CD4-positive, alpha-beta T cell (primary cell): ENCODE measurements at regions of chr1 and their contacts with region 1.

Region 1: DNA sequence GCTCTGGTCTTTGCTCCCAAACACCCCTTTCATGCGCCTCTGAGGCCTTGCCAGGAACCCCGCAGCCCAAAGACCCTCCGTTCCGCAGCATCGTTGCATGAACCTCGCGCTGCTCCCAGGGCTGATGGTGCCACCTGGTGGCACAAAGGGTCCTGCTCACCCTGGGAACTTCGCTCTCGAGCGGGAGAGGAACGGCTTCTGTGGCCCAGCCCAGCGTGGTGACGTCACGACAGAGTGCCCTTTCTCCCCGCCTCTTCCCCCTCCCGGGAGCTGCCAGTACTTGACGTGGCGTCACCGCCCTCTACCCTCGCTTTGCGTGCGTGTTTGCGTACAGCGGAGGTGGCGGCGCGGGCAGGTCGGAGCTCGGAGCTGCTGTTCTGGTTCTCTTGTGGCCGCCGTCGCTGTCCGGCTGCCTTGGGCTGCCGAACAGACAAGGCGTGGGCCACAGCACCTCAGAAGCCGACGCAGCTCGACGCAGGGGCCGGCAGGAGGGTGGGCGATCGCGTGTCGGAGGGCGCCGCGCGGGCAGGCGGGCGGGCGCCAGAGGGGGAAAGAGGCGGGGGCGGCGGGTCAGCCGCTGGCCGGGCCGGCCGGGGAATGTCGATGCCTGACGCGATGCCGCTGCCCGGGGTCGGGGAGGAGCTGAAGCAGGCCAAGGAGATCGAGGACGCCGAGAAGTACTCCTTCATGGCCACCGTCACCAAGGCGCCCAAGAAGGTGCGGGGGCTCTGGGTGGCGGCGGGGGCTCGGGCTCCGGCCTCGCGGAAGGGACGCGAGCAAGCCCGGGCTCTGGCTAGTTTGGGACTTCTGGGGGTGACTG is at the start of gene AHCYL1:
- DNase-seq: peak; percentile 98 to 100 (median 99)
- ATAC-seq: peak; percentile 99
- H3K4me3 ChIP-seq: peak within 1 kb of the TSS; percentile 90
- H3K4me3 Mint-ChIP-seq: peak within 1 kb of the TSS; percentile 99
- H3K27ac ChIP-seq: peak within 1 kb of the TSS; percentile 71 to 80
- H3K27ac Mint-ChIP-seq: peak within 1 kb of the TSS; percentile 97
- H3K4me1 ChIP-seq: peaks cover 29% of the 10 kb centered on the region
- H3K4me1 Mint-ChIP-seq: peaks cover 51% of the 10 kb centered on the region
- H3K27me3 ChIP-seq: no peaks in the 10 kb centered on the region
- H3K27me3 Mint-ChIP-seq: no peaks in the 10 kb centered on the region
- CTCF ChIP-seq: peak; percentile 92
- total RNA-seq, gene AHCYL1: 6.9 to 8.4 TPM

Region 2: GRCh38 chr1:109282952-109283747 is 701.5 kb before region 1 on chr1 and contains the start of gene PSRC1:
- CTCF ChIA-PET with region 1: no interaction called
- POLR2A ChIA-PET with region 1: no interaction called
- intact Hi-C with region 1: loop called in 1 of 2 experiments (anchors 10 kb)
- DNase-seq: peak; percentile 81 to 94 (median 85)
- ATAC-seq: peak; percentile 93
- H3K4me3 ChIP-seq: peak within 1 kb of the TSS; percentile 70
- H3K4me3 Mint-ChIP-seq: peak within 1 kb of the TSS; percentile 94
- H3K27ac ChIP-seq: peak within 1 kb of the TSS; percentile 31 to 59
- H3K27ac Mint-ChIP-seq: peak within 1 kb of the TSS; percentile 78
- H3K4me1 ChIP-seq: peaks cover 27% of the 10 kb centered on the region
- H3K4me1 Mint-ChIP-seq: peaks cover 19% of the 10 kb centered on the region
- H3K27me3 ChIP-seq: no peaks in the 10 kb centered on the region
- H3K27me3 Mint-ChIP-seq: no peaks in the 10 kb centered on the region
- CTCF ChIP-seq: peak; percentile 71
- total RNA-seq, gene PSRC1: 0.22 to 0.91 TPM

Region 3: GRCh38 chr1:109643385-109644230 is 341.1 kb before region 1 on chr1:
- CTCF ChIA-PET with region 1: interaction called, 28 read pairs
- POLR2A ChIA-PET with region 1: interaction called, 9 read pairs
- intact Hi-C with region 1: loop called (anchors 5 kb)
- DNase-seq: peak; percentile 79 to 91 (median 88)
- ATAC-seq: peak; percentile 94
- H3K4me3 ChIP-seq: no peak overlapping the region
- H3K4me3 Mint-ChIP-seq: no peak overlapping the region
- H3K27ac ChIP-seq: no peak overlapping the region
- H3K27ac Mint-ChIP-seq: no peak overlapping the region
- H3K4me1 ChIP-seq: peaks cover 15% of the 10 kb centered on the region
- H3K4me1 Mint-ChIP-seq: peaks cover 20% of the 10 kb centered on the region
- H3K27me3 ChIP-seq: no peaks in the 10 kb centered on the region
- H3K27me3 Mint-ChIP-seq: no peaks in the 10 kb centered on the region
- CTCF ChIP-seq: peak; percentile 85

Region 4: DNA sequence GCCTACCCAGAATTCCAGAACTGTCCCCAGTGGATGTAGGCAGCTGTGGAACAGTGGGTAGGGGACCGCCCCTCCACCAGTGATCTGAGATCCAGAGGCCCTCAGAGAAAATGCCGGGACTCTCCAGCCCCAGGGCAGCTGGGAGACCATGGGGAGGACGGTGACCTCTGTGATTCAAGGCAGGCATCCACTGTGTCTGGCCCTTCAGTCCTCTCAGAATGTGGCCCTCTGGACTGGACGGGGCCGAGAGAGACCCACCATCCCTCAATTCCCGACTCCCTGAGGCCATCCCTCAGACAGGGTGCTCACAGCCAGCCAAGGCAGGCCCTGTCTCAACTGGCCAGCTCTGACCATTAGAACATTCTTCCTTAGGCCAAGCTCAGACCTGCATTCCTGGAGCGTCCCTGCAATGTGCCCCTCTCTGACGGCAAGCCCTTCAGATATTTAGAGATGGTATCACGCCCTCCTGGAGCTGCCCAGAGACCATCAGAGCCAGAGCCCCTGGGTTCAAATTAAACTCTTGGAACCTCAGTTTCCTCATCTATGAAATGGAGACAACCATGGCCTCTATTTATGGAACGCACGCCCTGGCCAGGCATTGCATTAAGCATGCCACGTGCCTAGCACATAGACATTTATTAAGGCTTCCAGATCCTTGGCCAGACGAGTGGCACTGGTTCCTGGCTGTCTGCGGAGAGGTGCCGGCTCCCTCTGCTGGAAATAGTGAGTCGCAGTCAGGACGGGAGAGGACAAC is 211.3 kb before region 1 on chr1:
- CTCF ChIA-PET with region 1: interaction called, 133 read pairs
- POLR2A ChIA-PET with region 1: interaction called, 44 read pairs
- intact Hi-C with region 1: loop called (anchors 1 kb)
- DNase-seq: peak; percentile 50 to 87 (median 62)
- ATAC-seq: peak; percentile 88
- H3K4me3 ChIP-seq: no peak overlapping the region
- H3K4me3 Mint-ChIP-seq: no peak overlapping the region
- H3K27ac ChIP-seq: no peak overlapping the region
- H3K27ac Mint-ChIP-seq: no peak overlapping the region
- H3K4me1 ChIP-seq: peaks cover 21% of the 10 kb centered on the region
- H3K4me1 Mint-ChIP-seq: peaks cover 12% of the 10 kb centered on the region
- H3K27me3 ChIP-seq: no peaks in the 10 kb centered on the region
- H3K27me3 Mint-ChIP-seq: no peaks in the 10 kb centered on the region
- CTCF ChIP-seq: peak; percentile 66

Region 5: GRCh38 chr1:109802901-109803561 is 181.6 kb before region 1 on chr1:
- CTCF ChIA-PET with region 1: interaction called, 9 read pairs
- POLR2A ChIA-PET with region 1: interaction called, 16 read pairs
- intact Hi-C with region 1: no loop called
- DNase-seq: peak in 1 of 14 experiments; percentile 33
- ATAC-seq: no peak
- H3K4me3 ChIP-seq: peak overlapping the region; percentile 17
- H3K4me3 Mint-ChIP-seq: peak overlapping the region; percentile 58
- H3K27ac ChIP-seq: peak overlapping the region; percentile 79 to 80
- H3K27ac Mint-ChIP-seq: peak overlapping the region; percentile 83
- H3K4me1 ChIP-seq: peaks cover 91% of the 10 kb centered on the region
- H3K4me1 Mint-ChIP-seq: peaks cover 85% of the 10 kb centered on the region
- H3K27me3 ChIP-seq: no peaks in the 10 kb centered on the region
- H3K27me3 Mint-ChIP-seq: no peaks in the 10 kb centered on the region
- CTCF ChIP-seq: no peak

Region 6: GRCh38 chr1:110034451-110035235 is 50.0 kb after region 1 on chr1 and contains the start of gene STRIP1:
- CTCF ChIA-PET with region 1: interaction called, 11 read pairs
- POLR2A ChIA-PET with region 1: interaction called, 19 read pairs
- intact Hi-C with region 1: loop called (anchors 1 to 2 kb)
- DNase-seq: peak; percentile 85 to 98 (median 89)
- ATAC-seq: peak; percentile 95
- H3K4me3 ChIP-seq: peak within 1 kb of the TSS; percentile 84
- H3K4me3 Mint-ChIP-seq: peak within 1 kb of the TSS; percentile 98
- H3K27ac ChIP-seq: peak within 1 kb of the TSS; percentile 37 to 64
- H3K27ac Mint-ChIP-seq: peak within 1 kb of the TSS; percentile 81
- H3K4me1 ChIP-seq: peaks cover 41% of the 10 kb centered on the region
- H3K4me1 Mint-ChIP-seq: peaks cover 56% of the 10 kb centered on the region
- H3K27me3 ChIP-seq: no peaks in the 10 kb centered on the region
- H3K27me3 Mint-ChIP-seq: no peaks in the 10 kb centered on the region
- CTCF ChIP-seq: no peak
- total RNA-seq, gene STRIP1: 74.3 to 80.9 TPM